Ovary (tissue), 10 donors: ENCODE measurements at regions of chr5 and their contacts with region 1.

Region 1: GRCh38 chr5:97820146-97820545 is 637.1 kb upstream of the RIOK2 start:
- DNase-seq: no peak
- H3K4me3 ChIP-seq: no peak overlapping the region
- H3K27ac ChIP-seq: no peak overlapping the region
- H3K4me1 ChIP-seq: no peaks in the 10 kb centered on the region
- H3K27me3 ChIP-seq: no peaks in the 10 kb centered on the region
- CTCF ChIP-seq: no peak
- EP300 ChIP-seq: no peak
- POLR2A ChIP-seq: no peak

Region 2: GRCh38 chr5:97797994-97798451 is 22.1 kb before region 1 on chr5:
- intact Hi-C with region 1: loop called in 1 of 4 experiments (anchors 2 kb)
- DNase-seq: no peak
- H3K4me3 ChIP-seq: no peak overlapping the region
- H3K27ac ChIP-seq: no peak overlapping the region
- H3K4me1 ChIP-seq: no peaks in the 10 kb centered on the region
- H3K27me3 ChIP-seq: no peaks in the 10 kb centered on the region
- CTCF ChIP-seq: no peak
- EP300 ChIP-seq: no peak
- POLR2A ChIP-seq: no peak